Heart right ventricle (tissue), 16 donors: ENCODE measurements at regions of chr5 and their contacts with region 1.

Region 1: DNA sequence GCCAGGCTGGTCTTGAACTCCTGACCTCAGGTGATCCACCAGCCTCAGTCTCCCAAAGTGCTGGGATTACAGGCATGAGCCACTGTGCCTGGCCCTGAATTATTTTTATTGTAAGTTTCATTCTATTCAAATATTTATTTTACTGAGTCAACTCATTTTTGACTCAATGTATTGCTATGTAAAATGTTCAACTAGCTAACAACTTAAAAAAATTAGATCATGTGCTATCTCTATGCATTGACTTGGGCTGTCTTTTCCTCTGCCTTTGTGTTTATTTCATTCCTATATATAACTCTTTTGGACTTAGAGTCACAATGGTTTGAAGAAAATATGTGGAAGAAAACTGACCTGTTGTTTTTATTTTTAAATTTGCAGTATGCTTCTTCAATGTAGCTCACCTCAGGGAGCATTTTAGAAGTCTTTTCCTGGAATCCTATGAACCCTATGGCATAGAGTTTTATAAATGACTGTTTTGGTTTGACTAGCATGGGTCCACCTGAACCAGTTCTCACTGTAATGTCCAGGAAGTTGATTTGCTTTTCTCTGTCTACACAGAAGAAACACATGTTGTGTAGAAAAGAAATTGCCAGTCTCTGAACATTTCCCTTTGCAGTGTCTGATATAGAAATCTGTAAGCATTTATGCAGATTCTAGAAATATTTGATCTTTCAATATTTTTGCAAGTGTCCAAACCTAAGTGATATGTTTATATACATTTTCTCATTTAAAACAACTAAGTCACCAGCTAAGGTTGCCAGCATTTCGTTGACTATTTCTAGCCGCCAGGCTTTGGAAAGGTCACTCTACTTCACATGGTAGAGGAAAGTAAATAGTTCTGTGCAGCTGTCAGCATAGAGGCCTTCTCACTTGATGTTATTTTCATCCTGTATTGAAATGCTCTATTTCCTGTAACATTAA is 138.8 kb downstream of the PCSK1 start:
- DNase-seq: peak in 1 of 2 donors; percentile 19
- ATAC-seq: peak in 7 of 8 donors; percentile 58 to 87 (median 78)
- H3K4me3 ChIP-seq: no peak overlapping the region
- H3K27ac ChIP-seq: peak overlapping the region; percentile 7 to 77 (median 70)
- H3K4me1 ChIP-seq: peaks cover 0 to 46% (median 25%) of the 10 kb centered on the region in 9 donors
- H3K27me3 ChIP-seq: no peaks in the 10 kb centered on the region
- CTCF ChIP-seq: no peak

Region 2: DNA sequence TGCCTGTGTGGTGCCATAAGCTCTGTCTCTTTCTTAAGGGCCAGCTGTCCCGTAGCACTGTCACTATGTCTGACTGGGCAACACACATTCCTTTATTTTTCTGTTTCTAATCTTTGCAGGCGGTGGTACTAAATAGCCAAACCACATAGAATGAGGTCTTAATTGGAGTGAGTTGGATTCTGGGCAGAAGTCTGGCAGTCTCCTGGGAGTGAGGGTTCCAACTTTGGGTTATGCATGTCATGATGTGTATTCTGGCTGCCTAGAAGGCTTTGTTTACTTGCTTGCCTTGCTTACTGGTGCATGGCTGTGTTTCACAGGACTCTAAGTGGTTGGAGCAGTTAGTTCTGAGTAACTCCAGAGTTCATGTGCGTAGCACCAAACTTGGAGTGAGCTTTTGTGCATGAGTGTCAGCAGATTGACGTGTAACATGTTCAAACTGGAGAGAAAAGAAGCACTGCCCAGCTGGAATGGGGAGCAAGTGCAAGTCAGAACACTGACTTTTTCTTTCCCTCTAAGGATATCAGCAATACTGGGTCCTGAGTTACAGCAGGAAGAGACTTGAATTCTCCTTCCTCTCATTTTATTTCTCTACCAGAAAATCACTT is 47.0 kb before region 1 on chr5:
- intact Hi-C with region 1: loop called in 2 of 10 experiments (anchors 5 kb)
- DNase-seq: peak in 1 of 2 donors; percentile 52
- ATAC-seq: peak; percentile 67 to 97 (median 92)
- H3K4me3 ChIP-seq: peak overlapping the region in 3 of 10 donors; percentile 2 to 10 (median 5)
- H3K27ac ChIP-seq: peak overlapping the region; percentile 54 to 86 (median 74)
- H3K4me1 ChIP-seq: peaks cover 0 to 48% (median 17%) of the 10 kb centered on the region in 9 donors
- H3K27me3 ChIP-seq: no peaks in the 10 kb centered on the region
- CTCF ChIP-seq: no peak

Region 3: GRCh38 chr5:96256778-96257470 is 37.3 kb before region 1 on chr5:
- intact Hi-C with region 1: loop called in 1 of 10 experiments (anchors 5 kb)
- DNase-seq: no peak
- ATAC-seq: peak in 5 of 8 donors; percentile 24 to 53 (median 45)
- H3K4me3 ChIP-seq: no peak overlapping the region
- H3K27ac ChIP-seq: no peak overlapping the region
- H3K4me1 ChIP-seq: peaks cover 0 to 40% (median 10%) of the 10 kb centered on the region in 9 donors
- H3K27me3 ChIP-seq: no peaks in the 10 kb centered on the region
- CTCF ChIP-seq: no peak

Region 4: GRCh38 chr5:96718635-96719077 is 424.4 kb after region 1 on chr5:
- intact Hi-C with region 1: no loop called
- DNase-seq: peak; percentile 52 to 57
- ATAC-seq: peak; percentile 20 to 79 (median 54)
- H3K4me3 ChIP-seq: no peak overlapping the region
- H3K27ac ChIP-seq: peak overlapping the region; percentile 25 to 71 (median 57)
- H3K4me1 ChIP-seq: peaks cover 5 to 98% (median 80%) of the 10 kb centered on the region in 9 donors
- H3K27me3 ChIP-seq: no peaks in the 10 kb centered on the region
- CTCF ChIP-seq: no peak